CD8-positive, alpha-beta T cell (primary cell): ENCODE measurements at regions of chr11 and their contacts with region 1.

Region 1: DNA sequence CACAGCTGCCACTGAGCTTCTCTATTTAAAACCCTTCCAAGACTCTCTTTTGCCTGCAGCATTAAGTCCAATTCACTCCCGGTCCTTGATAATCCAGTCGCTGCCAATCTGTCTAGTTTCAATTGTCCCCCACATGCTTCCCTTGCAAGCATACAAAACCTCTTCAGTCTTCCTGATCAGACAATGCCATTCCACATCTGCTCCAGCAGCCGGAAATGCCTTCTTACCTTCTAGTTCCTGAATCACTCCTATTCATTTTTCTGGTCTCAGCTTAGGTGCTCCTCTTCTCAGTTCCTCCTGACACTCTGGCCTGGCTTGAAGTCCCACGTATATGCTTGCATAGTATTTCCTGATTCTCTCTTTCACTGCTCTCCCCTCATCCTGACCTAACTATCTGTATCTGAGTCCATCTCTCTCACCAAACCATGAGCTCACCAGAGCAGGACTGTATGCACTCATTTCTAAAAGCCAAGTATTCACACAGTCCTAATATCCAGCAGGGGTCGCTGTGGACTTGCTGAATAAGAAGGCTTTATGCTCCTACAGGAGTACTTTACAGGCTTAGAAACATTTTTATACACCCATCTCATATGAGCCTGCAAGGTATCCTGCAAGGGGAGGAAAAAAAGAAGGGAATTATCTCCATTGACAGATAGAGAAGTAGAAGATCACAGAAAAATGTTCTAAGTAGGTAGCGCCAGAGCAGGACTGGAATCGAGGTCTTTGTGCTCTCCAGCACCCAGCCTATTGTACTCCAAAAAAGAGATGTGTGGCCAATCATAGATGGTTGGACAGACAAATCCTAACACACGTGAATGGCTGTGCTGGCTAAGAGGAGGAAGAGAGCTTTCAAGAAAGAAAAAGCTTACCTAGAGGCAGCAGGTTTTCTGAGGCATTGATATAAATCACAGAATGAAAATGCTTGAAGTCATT is 19.2 kb downstream of the XRRA1 start:
- DNase-seq: peak; percentile 30 to 86 (median 66)
- ATAC-seq: peak; percentile 76
- H3K4me3 ChIP-seq: no peak overlapping the region
- H3K4me3 Mint-ChIP-seq: no peak overlapping the region
- H3K27ac ChIP-seq: no peak overlapping the region
- H3K27ac Mint-ChIP-seq: no peak overlapping the region
- H3K4me1 ChIP-seq: no peaks in the 10 kb centered on the region
- H3K4me1 Mint-ChIP-seq: no peaks in the 10 kb centered on the region
- H3K27me3 ChIP-seq: no peaks in the 10 kb centered on the region
- H3K27me3 Mint-ChIP-seq: no peaks in the 10 kb centered on the region
- CTCF ChIP-seq: peak; percentile 90

Region 2: GRCh38 chr11:74909385-74909784 is 20.3 kb before region 1 on chr11:
- CTCF ChIA-PET with region 1: interaction called, 17 read pairs
- POLR2A ChIA-PET with region 1: no interaction called
- intact Hi-C with region 1: no loop called
- DNase-seq: no peak
- ATAC-seq: no peak
- H3K4me3 ChIP-seq: no peak overlapping the region
- H3K4me3 Mint-ChIP-seq: no peak overlapping the region
- H3K27ac ChIP-seq: no peak overlapping the region
- H3K27ac Mint-ChIP-seq: no peak overlapping the region
- H3K4me1 ChIP-seq: no peaks in the 10 kb centered on the region
- H3K4me1 Mint-ChIP-seq: no peaks in the 10 kb centered on the region
- H3K27me3 ChIP-seq: no peaks in the 10 kb centered on the region
- H3K27me3 Mint-ChIP-seq: no peaks in the 10 kb centered on the region
- CTCF ChIP-seq: no peak

Region 3: GRCh38 chr11:75022759-75023396 is 93.2 kb after region 1 on chr11:
- CTCF ChIA-PET with region 1: interaction called, 8 read pairs
- POLR2A ChIA-PET with region 1: no interaction called
- intact Hi-C with region 1: loop called in 1 of 2 experiments (anchors 2 kb)
- DNase-seq: peak; percentile 55 to 82 (median 71)
- ATAC-seq: peak; percentile 87
- H3K4me3 ChIP-seq: no peak overlapping the region
- H3K4me3 Mint-ChIP-seq: no peak overlapping the region
- H3K27ac ChIP-seq: no peak overlapping the region
- H3K27ac Mint-ChIP-seq: no peak overlapping the region
- H3K4me1 ChIP-seq: no peaks in the 10 kb centered on the region
- H3K4me1 Mint-ChIP-seq: no peaks in the 10 kb centered on the region
- H3K27me3 ChIP-seq: no peaks in the 10 kb centered on the region
- H3K27me3 Mint-ChIP-seq: no peaks in the 10 kb centered on the region
- CTCF ChIP-seq: peak; percentile 95

Region 4: DNA sequence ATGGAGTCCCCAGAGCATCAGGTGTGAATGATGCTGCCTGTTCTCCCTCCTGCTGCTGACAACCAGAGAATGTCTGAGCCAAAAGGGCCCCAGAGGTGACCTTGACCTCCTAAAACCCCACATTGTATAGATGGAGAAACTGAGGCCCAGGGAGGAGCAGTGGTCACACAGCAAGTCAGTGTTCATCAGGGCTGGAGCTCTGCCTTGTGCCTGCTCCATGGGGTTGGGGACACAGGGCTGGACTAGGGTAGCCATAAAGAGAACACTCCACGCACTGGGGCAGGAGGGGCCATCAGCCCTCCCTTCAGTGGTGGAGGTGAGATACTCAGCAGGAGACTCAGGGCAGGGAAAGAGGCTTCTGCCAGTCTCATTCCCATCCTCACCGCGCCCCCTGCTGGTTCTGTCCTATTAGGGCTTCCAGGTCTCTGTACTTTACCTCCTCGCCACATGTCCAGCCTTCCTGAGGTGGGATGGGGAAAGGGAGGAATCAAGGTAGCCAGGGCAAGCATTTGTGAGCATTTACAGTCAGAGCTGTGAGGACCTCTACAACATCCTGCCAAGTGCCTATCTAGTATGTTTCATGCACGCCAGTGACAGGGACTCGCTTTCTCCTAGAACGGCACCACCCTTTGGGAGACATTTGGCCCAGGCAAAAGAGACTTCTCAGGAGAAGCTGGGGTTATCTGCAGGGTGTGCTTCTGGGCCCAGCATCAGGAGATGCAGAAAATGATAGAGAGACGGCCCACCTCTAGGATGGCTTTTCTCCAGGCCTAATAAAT is 102.3 kb after region 1 on chr11:
- CTCF ChIA-PET with region 1: interaction called, 18 read pairs
- POLR2A ChIA-PET with region 1: no interaction called
- intact Hi-C with region 1: loop called (anchors 1 kb)
- DNase-seq: peak; percentile 29 to 72 (median 53)
- ATAC-seq: peak; percentile 56
- H3K4me3 ChIP-seq: no peak overlapping the region
- H3K4me3 Mint-ChIP-seq: no peak overlapping the region
- H3K27ac ChIP-seq: no peak overlapping the region
- H3K27ac Mint-ChIP-seq: no peak overlapping the region
- H3K4me1 ChIP-seq: no peaks in the 10 kb centered on the region
- H3K4me1 Mint-ChIP-seq: no peaks in the 10 kb centered on the region
- H3K27me3 ChIP-seq: no peaks in the 10 kb centered on the region
- H3K27me3 Mint-ChIP-seq: no peaks in the 10 kb centered on the region
- CTCF ChIP-seq: peak; percentile 52

Region 5: DNA sequence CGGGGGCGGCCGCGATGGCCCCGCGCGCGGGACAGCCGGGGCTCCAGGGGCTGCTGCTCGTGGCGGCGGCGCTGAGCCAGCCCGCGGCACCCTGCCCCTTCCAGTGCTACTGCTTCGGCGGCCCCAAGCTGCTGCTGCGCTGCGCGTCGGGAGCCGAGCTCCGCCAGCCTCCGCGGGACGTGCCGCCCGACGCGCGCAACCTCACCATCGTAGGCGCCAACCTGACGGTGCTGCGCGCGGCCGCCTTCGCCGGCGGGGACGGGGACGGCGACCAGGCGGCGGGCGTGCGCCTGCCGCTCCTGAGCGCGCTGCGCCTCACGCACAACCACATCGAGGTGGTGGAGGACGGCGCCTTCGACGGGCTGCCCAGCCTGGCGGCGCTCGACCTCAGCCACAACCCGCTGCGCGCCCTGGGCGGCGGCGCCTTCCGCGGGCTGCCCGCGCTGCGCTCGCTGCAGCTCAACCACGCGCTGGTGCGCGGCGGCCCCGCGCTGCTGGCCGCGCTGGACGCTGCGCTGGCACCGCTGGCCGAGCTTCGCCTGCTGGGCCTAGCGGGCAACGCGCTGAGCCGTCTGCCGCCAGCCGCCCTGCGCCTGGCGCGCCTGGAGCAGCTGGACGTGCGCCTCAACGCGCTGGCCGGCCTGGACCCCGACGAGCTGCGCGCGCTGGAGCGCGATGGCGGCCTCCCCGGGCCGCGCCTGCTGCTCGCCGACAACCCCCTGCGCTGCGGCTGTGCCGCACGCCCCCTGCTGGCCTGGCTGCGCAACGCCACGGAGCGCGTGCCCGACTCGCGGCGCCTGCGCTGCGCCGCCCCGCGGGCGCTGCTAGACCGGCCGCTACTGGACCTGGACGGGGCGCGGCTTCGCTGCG is 311.6 kb after region 1 on chr11:
- CTCF ChIA-PET with region 1: interaction called, 11 read pairs
- POLR2A ChIA-PET with region 1: no interaction called
- intact Hi-C with region 1: no loop called
- DNase-seq: peak; percentile 77 to 91 (median 83)
- ATAC-seq: peak; percentile 93
- H3K4me3 ChIP-seq: peak overlapping the region; percentile 31 to 61
- H3K4me3 Mint-ChIP-seq: peak overlapping the region; percentile 79
- H3K27ac ChIP-seq: no peak overlapping the region
- H3K27ac Mint-ChIP-seq: no peak overlapping the region
- H3K4me1 ChIP-seq: peaks cover 9% of the 10 kb centered on the region
- H3K4me1 Mint-ChIP-seq: peaks cover 10% of the 10 kb centered on the region
- H3K27me3 ChIP-seq: peaks cover 17 to 20% of the 10 kb centered on the region in 2 experiments
- H3K27me3 Mint-ChIP-seq: peaks cover 49% of the 10 kb centered on the region
- CTCF ChIP-seq: peak; percentile 77

Region 6: GRCh38 chr11:75248690-75249268 is 319.1 kb after region 1 on chr11:
- CTCF ChIA-PET with region 1: interaction called, 33 read pairs
- POLR2A ChIA-PET with region 1: no interaction called
- intact Hi-C with region 1: loop called (anchors 1 kb)
- DNase-seq: peak; percentile 77 to 91 (median 87)
- ATAC-seq: peak; percentile 100
- H3K4me3 ChIP-seq: no peak overlapping the region
- H3K4me3 Mint-ChIP-seq: no peak overlapping the region
- H3K27ac ChIP-seq: no peak overlapping the region
- H3K27ac Mint-ChIP-seq: no peak overlapping the region
- H3K4me1 ChIP-seq: no peaks in the 10 kb centered on the region
- H3K4me1 Mint-ChIP-seq: no peaks in the 10 kb centered on the region
- H3K27me3 ChIP-seq: no peaks in the 10 kb centered on the region
- H3K27me3 Mint-ChIP-seq: peaks cover 2% of the 10 kb centered on the region
- CTCF ChIP-seq: peak; percentile 100